Vagina (tissue), 2 donors: ENCODE measurements at regions of chr3 and their contacts with region 1.

Region 1: GRCh38 chr3:7562892-7563291 is 702.0 kb downstream of the GRM7 start:
- DNase-seq: no peak
- H3K4me3 ChIP-seq: no peak overlapping the region
- H3K27ac ChIP-seq: no peak overlapping the region
- H3K4me1 ChIP-seq: no peaks in the 10 kb centered on the region
- H3K27me3 ChIP-seq: no peaks in the 10 kb centered on the region
- CTCF ChIP-seq: no peak
- POLR2A ChIP-seq: no peak

Region 2: GRCh38 chr3:6229778-6230410 is 1333.0 kb before region 1 on chr3:
- intact Hi-C with region 1: loop called (anchors 5 kb)
- DNase-seq: no peak
- H3K4me3 ChIP-seq: no peak overlapping the region
- H3K27ac ChIP-seq: no peak overlapping the region
- H3K4me1 ChIP-seq: no peaks in the 10 kb centered on the region
- H3K27me3 ChIP-seq: no peaks in the 10 kb centered on the region
- CTCF ChIP-seq: no peak
- POLR2A ChIP-seq: no peak

Region 3: DNA sequence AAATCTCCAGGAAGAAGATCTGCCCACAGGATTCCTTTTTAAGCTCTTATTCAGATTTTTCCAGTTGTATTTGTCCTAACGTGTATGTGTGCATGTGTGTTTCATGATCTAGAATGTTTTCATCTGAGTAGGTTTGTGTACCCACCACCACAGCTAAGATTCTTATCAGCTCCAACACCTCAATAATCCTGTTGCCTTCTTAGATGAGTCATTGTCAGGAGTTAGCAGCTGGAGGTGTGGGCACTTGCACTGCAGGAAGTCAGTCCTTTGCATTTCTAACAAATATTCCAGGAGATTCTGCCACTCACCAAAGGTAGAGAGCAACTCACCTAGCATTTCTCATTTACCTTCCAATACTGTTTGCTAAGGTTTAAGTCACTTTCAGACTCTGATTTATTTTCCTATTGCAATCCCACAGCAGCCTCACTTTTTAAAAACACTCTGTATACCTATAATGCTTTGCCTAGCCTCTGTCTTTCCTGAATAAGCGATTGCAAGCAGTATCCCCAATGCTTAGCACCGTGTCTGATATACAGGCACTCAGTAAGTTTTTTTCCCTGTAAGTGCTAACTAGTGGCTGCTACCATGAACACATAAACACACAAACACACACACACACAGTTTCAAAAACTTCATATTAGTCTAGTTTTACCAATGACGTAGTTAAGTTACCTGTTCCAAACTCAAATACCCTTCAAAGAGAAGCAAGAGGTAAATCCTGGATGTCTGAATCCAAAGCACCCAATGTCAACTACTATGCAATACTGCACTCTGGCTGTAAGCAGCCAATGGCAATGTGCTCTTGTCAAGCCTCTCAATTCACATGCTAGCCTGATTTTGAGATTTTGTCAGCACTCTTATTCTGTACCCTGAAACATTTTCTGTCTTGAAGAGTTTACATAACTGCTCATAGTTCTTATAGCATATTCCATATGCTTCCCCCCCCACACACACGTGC is 225.3 kb after region 1 on chr3:
- intact Hi-C with region 1: no loop called
- DNase-seq: no peak
- H3K4me3 ChIP-seq: no peak overlapping the region
- H3K27ac ChIP-seq: no peak overlapping the region
- H3K4me1 ChIP-seq: no peaks in the 10 kb centered on the region
- H3K27me3 ChIP-seq: no peaks in the 10 kb centered on the region
- CTCF ChIP-seq: no peak
- POLR2A ChIP-seq: no peak